ENCODE measurements at regions of chr1 and their contacts with region 1.

Region 1: DNA sequence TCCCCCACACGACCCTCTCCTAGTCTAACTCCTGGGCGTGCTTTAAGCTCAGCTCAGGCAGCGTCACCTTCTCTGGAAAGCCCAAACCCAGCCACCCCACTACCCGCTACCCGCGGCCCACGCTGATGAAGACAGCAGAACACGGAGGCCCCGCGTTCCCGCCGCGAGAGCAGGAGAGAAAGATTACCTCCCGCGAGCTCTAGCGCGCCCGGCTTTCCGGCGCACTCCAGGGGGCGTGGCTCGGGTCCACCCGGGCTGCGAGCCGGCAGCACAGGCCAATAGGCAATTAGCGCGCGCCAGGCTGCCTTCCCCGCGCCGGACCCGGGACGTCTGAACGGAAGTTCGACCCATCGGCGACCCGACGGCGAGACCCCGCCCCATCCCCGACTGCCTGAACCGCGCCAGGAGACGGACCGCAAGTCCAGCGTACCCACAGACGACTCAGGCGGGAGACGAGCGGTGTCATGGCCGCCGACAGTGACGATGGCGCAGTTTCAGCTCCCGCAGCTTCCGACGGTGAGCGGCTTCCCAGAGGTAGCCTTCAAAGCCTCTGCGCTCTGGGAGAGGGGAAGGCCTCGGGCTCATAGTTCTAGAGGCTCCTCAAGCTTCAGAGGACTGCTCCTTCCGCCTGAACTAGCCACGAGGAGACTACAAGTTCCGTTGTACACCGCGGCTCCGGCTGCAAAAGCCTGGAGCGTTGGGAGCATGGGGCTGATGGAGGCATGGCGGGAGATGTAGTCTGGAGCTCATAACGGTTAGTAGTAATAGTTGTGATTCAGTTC is at the starts of genes MUTYH and TOE1:
- DNase-seq: peak; percentile 96
- H3K4me3 Mint-ChIP-seq: peak within 1 kb of the TSS; percentile 96
- H3K27ac Mint-ChIP-seq: peak within 1 kb of the TSS; percentile 100
- H3K4me1 Mint-ChIP-seq: peaks cover 58% of the 10 kb centered on the region
- H3K27me3 Mint-ChIP-seq: no peaks in the 10 kb centered on the region
- total RNA-seq, gene MUTYH: 37.2 to 39.2 TPM
- total RNA-seq, gene TOE1: 16.6 to 18.3 TPM

Region 2: DNA sequence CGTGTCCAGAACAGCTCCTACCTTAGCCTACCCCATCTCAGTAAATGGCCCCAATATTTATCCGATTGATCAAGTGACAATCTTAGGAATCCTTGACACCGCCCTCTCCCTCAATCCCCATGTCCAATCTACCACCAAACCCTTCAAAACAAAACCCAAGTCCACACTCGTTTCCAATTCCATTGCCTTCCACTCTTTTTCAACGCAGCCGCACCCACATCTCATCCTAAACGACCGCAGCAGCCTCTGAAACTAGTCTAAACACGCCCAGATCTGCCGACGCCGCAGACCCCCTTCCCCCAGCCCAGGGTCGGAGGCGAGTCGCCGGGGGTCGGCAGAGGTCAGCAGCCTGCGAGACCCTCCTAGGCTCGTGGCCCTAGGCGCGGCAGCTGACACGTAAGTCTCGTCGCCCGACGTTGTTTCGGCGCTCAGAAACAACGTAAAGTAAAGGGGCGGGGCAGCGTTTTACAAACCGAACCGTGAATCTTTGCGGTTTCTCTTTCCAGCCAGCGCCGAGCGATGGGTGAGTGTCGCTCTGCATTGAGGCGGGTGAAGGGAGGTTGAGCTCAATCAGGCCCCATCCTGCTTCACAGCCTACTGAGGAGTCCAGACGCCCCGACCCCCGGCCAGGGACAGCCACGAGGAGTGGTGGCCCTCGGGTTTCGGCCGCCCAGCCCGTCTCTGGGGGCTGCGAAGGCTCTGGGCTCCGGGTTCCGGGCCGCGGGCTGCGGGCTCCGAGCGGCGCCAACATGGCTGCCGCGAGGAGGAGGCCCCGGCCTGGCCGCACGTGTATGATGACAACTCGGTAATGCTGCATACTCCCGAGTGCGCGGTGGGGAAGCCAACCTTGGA is 564.7 kb before region 1 on chr1 and contains the start of gene RPS8:
- CTCF ChIA-PET with region 1: no interaction called
- POLR2A ChIA-PET with region 1: interaction called, 21 read pairs
- DNase-seq: peak; percentile 93
- H3K4me3 Mint-ChIP-seq: peak within 1 kb of the TSS; percentile 90
- H3K27ac Mint-ChIP-seq: peak within 1 kb of the TSS; percentile 90
- H3K4me1 Mint-ChIP-seq: peaks cover 35% of the 10 kb centered on the region
- H3K27me3 Mint-ChIP-seq: no peaks in the 10 kb centered on the region
- total RNA-seq, gene RPS8: 1,610 to 1,658 TPM

Region 3: DNA sequence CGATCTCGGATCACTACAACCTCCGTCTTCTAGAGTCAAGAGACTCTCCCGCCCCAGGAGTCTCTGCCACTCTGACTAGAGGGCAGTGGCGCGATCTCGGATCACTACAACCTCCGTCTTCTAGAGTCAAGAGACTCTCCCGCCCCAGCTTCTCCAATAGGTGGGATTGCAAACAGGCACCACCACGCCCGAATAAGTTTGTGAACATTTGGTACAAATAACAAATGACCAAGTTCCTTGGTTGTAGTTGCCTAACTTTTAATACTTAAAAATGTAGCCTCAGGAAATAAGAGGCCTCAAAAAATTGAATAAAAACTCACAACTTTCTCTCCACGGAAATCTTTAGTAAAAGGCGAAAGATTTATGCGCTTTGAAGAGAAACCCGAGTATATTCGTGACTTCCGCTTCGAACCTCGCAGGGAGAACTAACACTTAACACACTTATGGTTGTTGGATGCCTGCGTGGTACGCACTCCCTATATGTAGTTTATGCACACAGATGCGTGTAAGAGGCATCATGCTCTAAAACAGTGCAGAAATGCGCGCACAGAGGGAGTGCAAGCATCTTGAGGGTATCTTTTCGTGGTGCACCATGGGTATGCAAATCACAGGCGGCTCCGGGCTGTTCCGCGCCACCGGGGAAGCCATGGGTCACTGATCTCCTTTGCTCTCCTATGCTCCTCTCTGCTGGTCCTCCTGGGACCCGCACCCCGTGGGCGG is 520.2 kb before region 1 on chr1:
- CTCF ChIA-PET with region 1: no interaction called
- POLR2A ChIA-PET with region 1: interaction called, 30 read pairs
- DNase-seq: peak; percentile 87
- H3K4me3 Mint-ChIP-seq: peak overlapping the region; percentile 85
- H3K27ac Mint-ChIP-seq: peak overlapping the region; percentile 98
- H3K4me1 Mint-ChIP-seq: peaks cover 45% of the 10 kb centered on the region
- H3K27me3 Mint-ChIP-seq: no peaks in the 10 kb centered on the region

Region 4: DNA sequence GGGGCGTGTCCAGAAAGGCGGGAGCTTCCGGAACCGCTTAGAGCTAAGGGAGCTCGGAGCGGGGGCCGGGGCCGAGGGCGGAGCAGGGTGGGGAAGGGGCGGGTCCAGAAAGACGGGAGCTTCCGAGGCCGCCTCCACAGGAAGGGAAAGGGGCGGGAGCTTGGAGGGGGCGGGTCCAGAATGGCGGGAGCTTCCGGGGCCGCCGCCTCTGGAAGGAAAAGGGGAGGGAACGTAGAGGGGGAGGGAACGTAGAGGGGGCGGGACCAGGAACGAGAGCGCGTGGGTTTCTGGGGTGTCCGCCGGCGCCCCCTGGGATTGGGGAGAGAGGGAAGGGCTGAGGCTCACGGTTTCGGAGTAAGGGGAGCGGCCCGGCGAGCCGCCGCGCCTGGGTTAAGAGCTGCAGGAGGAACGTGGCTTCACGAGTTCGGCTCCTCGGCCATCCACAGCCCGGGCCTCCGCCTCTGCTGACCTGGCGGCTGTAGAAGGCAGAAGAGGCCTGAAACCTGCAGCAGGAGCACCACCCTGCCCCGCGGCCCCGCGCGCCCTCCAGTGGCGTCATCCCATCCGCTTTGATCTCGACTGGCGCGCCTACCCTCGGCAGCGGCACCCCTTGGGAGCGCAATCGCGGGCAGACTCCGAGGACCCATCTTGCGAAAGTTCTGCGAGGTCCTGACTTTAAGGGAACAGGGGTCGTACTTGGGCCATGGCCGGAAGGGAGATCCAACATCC is 36.2 kb before region 1 on chr1:
- CTCF ChIA-PET with region 1: interaction called, 33 read pairs
- POLR2A ChIA-PET with region 1: interaction called, 112 read pairs
- DNase-seq: peak; percentile 99
- H3K4me3 Mint-ChIP-seq: peak overlapping the region; percentile 83
- H3K27ac Mint-ChIP-seq: peak overlapping the region; percentile 86
- H3K4me1 Mint-ChIP-seq: peaks cover 44% of the 10 kb centered on the region
- H3K27me3 Mint-ChIP-seq: no peaks in the 10 kb centered on the region

Region 5: DNA sequence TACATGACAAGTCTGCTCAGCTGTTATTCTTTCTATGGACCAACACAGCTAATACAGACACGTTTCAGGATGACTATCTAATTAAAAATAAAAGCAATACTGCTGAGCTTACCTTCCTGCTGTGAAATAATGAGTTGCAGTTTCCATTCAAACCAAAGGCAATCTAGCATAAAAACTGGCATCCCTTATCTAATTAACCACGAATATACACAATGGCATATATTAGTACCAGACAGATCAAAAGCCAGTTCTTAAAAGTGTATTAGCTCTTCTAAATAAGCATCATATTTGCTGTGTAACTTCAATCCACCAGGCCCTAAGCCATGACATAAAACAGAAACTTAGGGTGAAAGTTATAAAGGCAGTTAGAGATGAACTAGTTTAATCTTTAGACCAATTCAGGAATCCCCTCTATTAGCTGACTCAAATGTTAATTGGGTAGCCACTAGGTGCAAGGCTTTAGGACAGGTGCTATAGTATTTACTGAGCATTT is 130.4 kb after region 1 on chr1:
- CTCF ChIA-PET with region 1: no interaction called
- POLR2A ChIA-PET with region 1: no interaction called
- DNase-seq: no peak
- H3K4me3 Mint-ChIP-seq: no peak overlapping the region
- H3K27ac Mint-ChIP-seq: no peak overlapping the region
- H3K4me1 Mint-ChIP-seq: peaks cover 5% of the 10 kb centered on the region
- H3K27me3 Mint-ChIP-seq: no peaks in the 10 kb centered on the region

Region 6: DNA sequence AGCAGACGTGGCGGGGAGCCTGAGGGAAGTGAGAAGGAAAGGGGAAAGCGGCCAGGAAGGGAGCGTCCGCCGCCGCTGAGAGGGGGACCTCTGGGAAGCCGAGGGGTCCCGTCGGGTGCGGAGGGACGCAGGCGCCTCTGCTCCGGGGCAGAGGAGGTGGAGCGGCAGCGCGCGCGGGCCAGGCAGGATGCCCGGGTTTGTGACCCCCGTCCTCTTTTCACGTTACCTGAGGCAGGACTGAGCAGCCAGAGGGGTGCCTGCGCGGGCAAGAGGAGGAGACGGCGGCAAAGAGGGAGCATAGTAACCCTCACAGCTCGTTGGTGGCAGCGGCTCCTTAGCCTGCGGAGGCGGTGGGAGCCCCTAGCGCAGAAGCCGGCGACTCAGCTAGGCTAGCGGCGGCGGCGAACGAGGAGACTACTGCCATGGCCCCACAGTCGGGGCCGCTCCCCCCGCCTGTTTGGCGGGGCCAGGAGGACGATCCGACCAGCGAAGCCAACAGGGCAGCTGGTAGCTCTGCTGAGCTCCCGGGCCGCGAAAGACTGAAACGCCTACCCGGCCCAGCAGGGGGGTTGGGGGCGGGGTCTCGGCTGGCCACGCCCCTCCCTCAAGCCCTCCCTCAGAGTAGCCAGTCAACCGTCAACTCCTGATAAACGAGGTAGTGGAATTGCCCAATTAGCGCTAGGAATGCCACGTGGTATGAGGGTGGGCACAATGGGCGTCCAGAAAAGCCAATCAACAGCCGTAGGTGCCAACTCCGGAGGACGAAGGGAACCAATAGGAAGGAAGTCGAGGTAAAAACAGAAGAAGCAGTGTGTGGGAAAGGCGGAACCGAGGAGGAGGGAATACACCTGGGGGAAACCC is 150.9 kb after region 1 on chr1 and contains the start of gene TESK2:
- CTCF ChIA-PET with region 1: interaction called, 37 read pairs
- POLR2A ChIA-PET with region 1: interaction called, 71 read pairs
- DNase-seq: peak; percentile 98
- H3K4me3 Mint-ChIP-seq: no peak within 1 kb of the TSS
- H3K27ac Mint-ChIP-seq: no peak within 1 kb of the TSS
- H3K4me1 Mint-ChIP-seq: peaks cover 7% of the 10 kb centered on the region
- H3K27me3 Mint-ChIP-seq: peaks cover 7% of the 10 kb centered on the region
- total RNA-seq, gene TESK2: 3.7 to 4.3 TPM

Region 7: DNA sequence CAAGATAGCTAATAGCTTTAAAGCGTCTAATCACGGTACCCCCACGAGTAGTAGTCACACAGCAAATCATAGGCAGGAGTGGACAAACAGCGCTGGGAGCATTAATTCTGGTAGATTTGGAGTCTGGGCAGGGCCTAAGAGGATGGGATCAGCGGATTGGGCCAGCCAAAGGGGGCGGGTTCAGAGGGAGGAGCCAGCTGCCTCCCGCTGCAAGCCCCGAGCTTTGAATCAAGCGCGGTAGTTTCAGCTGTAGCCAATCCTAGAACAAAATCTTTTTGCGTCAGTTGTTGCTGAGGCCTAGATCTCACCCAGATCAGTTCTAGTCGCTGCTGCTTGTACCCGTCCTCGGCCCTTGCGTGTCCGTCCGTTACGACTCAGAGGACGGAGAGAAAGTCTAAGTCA is 243.3 kb after region 1 on chr1:
- CTCF ChIA-PET with region 1: interaction called, 9 read pairs
- POLR2A ChIA-PET with region 1: interaction called, 49 read pairs
- DNase-seq: peak; percentile 96
- H3K4me3 Mint-ChIP-seq: peak overlapping the region; percentile 88
- H3K27ac Mint-ChIP-seq: peak overlapping the region; percentile 98
- H3K4me1 Mint-ChIP-seq: peaks cover 29% of the 10 kb centered on the region
- H3K27me3 Mint-ChIP-seq: no peaks in the 10 kb centered on the region